WTC11 (cell line): ENCODE measurements at regions of chr17 and their contacts with region 1.

Region 1: GRCh38 chr17:35596530-35597233 is 9.6 kb downstream of the AP2B1 start:
- DNase-seq: peak; percentile 81
- ATAC-seq: peak; percentile 99
- H3K4me3 Mint-ChIP-seq: peak overlapping the region; percentile 45
- H3K27ac Mint-ChIP-seq: peak overlapping the region; percentile 71; the same call in 1 of the 2 replicates
- H3K4me1 Mint-ChIP-seq: peaks cover 6% of the 10 kb centered on the region
- H3K27me3 Mint-ChIP-seq: no peaks in the 10 kb centered on the region
- CTCF ChIP-seq: peak; percentile 83

Region 2: GRCh38 chr17:35510052-35510451 is 86.6 kb before region 1 on chr17:
- CTCF ChIA-PET with region 1: no interaction called
- POLR2A ChIA-PET with region 1: no interaction called
- DNase-seq: no peak
- ATAC-seq: no peak
- H3K4me3 Mint-ChIP-seq: no peak overlapping the region
- H3K27ac Mint-ChIP-seq: no peak overlapping the region
- H3K4me1 Mint-ChIP-seq: no peaks in the 10 kb centered on the region
- H3K27me3 Mint-ChIP-seq: peaks cover 68% of the 10 kb centered on the region
- CTCF ChIP-seq: no peak

Region 3: GRCh38 chr17:35578197-35578928 is 18.3 kb before region 1 on chr17 and contains the start of gene PEX12:
- CTCF ChIA-PET with region 1: interaction called, 31 read pairs
- POLR2A ChIA-PET with region 1: interaction called, 6 read pairs
- DNase-seq: peak; percentile 83
- ATAC-seq: peak; percentile 96
- H3K4me3 Mint-ChIP-seq: peak within 1 kb of the TSS; percentile 90
- H3K27ac Mint-ChIP-seq: peak within 1 kb of the TSS; percentile 89
- H3K4me1 Mint-ChIP-seq: peaks cover 11% of the 10 kb centered on the region; the same call in 1 of the 2 replicates
- H3K27me3 Mint-ChIP-seq: peaks cover 4% of the 10 kb centered on the region
- CTCF ChIP-seq: no peak
- total RNA-seq, gene PEX12: 4.7 to 6.5 TPM (median 5.2 TPM) in 3 replicates

Region 4: GRCh38 chr17:35607239-35607847 is 10.7 kb after region 1 on chr17:
- CTCF ChIA-PET with region 1: interaction called, 17 read pairs
- POLR2A ChIA-PET with region 1: no interaction called
- DNase-seq: no peak
- ATAC-seq: no peak
- H3K4me3 Mint-ChIP-seq: no peak overlapping the region
- H3K27ac Mint-ChIP-seq: no peak overlapping the region
- H3K4me1 Mint-ChIP-seq: no peaks in the 10 kb centered on the region
- H3K27me3 Mint-ChIP-seq: no peaks in the 10 kb centered on the region
- CTCF ChIP-seq: no peak

Region 5: GRCh38 chr17:35612924-35613521 is 16.3 kb after region 1 on chr17:
- CTCF ChIA-PET with region 1: interaction called, 17 read pairs
- POLR2A ChIA-PET with region 1: no interaction called
- DNase-seq: peak; percentile 46
- ATAC-seq: 0 out of 2 replicates have a peak, but pooled peaks have one; percentile 36
- H3K4me3 Mint-ChIP-seq: no peak overlapping the region
- H3K27ac Mint-ChIP-seq: no peak overlapping the region
- H3K4me1 Mint-ChIP-seq: no peaks in the 10 kb centered on the region
- H3K27me3 Mint-ChIP-seq: no peaks in the 10 kb centered on the region
- CTCF ChIP-seq: no peak